Dorsolateral prefrontal cortex (tissue), 120 donors: ENCODE measurements at regions of chr6 and their contacts with region 1.

Region 1: DNA sequence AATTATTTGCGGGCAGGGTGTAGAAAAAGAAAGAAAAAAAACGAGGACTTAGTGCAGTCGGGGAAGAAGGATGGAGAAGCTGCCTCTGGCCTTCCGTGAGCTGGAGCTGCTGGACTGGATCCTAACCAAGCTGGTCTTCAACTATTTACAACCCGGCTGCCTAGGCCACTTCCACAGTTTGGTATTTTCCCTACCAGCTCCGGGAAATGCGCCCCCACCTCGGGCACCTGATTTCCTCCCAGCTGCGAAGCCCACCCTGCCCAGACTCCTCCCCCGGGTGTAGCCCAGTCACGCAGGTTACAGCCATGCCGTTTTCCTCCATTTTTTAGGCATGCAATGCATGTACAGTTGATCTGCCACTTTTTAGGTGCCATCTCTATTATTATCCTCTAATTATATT is 21.2 kb downstream of the THEMIS start:
- DNase-seq: peak in 4 of 10 donors; percentile 27 to 46 (median 38)
- H3K4me3 ChIP-seq: peak overlapping the region in 34 of 59 donors; percentile 3 to 55 (median 32)
- H3K27ac ChIP-seq: no peak overlapping the region
- H3K27me3 ChIP-seq: no peaks in the 10 kb centered on the region
- CTCF ChIP-seq: peak in 1 of 56 donors; percentile 22

Region 2: DNA sequence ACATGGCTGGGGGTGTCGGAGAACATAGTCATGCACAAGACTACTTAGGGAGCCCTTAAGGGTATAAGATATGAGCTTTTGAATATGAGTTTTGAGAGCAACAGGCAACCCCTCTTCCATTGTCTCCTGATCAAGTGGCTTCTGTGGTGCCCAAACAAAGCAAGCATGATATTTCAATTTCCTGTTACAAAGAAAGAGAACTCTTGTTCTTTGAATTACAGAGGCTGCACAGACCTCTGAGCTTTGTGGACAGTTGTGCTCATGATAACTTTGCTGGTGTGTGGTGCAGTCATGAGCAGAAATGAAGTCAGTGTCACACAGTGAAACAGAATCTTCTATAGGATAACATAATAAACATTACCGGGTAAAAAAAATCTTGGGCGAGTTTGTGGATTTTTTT is 88.0 kb after region 1 on chr6:
- intact Hi-C with region 1: loop called (anchors 5 to 10 kb)
- DNase-seq: peak in 2 of 10 donors; percentile 18 to 30
- H3K4me3 ChIP-seq: no peak overlapping the region
- H3K27ac ChIP-seq: peak overlapping the region in 44 of 59 donors; percentile 5 to 86 (median 60)
- H3K27me3 ChIP-seq: no peaks in the 10 kb centered on the region
- CTCF ChIP-seq: peak in 2 of 56 donors; percentile 9 to 24

Region 3: DNA sequence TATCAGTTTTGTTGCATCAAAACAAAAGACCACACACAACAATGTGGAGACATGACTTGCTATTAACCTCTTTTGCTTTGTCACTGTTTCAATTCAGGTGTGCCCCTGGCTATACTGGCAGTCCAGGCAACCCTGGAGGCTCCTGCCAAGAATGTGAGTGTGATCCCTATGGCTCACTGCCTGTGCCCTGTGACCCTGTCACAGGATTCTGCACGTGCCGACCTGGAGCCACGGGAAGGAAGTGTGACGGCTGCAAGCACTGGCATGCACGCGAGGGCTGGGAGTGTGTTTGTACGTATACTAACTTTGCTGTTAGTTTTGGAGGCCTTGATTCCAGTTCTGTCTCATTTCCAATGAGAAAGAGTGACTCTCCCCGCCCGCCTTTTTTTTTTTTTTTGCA is 1473.4 kb after region 1 on chr6:
- intact Hi-C with region 1: no loop called
- DNase-seq: no peak
- H3K4me3 ChIP-seq: no peak overlapping the region
- H3K27ac ChIP-seq: no peak overlapping the region
- H3K27me3 ChIP-seq: no peaks in the 10 kb centered on the region
- CTCF ChIP-seq: no peak